ENCODE measurements at regions of chr12 and their contacts with region 1.

Region 1: GRCh38 chr12:10673660-10674384 is at the start of gene STYK1:
- DNase-seq: peak; percentile 91
- H3K4me3 Mint-ChIP-seq: peak within 1 kb of the TSS; percentile 78
- H3K27ac Mint-ChIP-seq: peak within 1 kb of the TSS; percentile 38
- H3K4me1 Mint-ChIP-seq: peaks cover 38% of the 10 kb centered on the region
- H3K27me3 Mint-ChIP-seq: peaks cover 58% of the 10 kb centered on the region
- total RNA-seq, gene STYK1: not detected in 2 replicates

Region 2: GRCh38 chr12:10153271-10154144 is 520.3 kb before region 1 on chr12:
- intact Hi-C with region 1: no loop called
- DNase-seq: peak; percentile 88
- H3K4me3 Mint-ChIP-seq: peak overlapping the region; percentile 92
- H3K27ac Mint-ChIP-seq: no peak overlapping the region
- H3K4me1 Mint-ChIP-seq: peaks cover 9% of the 10 kb centered on the region
- H3K27me3 Mint-ChIP-seq: peaks cover 47% of the 10 kb centered on the region

Region 3: DNA sequence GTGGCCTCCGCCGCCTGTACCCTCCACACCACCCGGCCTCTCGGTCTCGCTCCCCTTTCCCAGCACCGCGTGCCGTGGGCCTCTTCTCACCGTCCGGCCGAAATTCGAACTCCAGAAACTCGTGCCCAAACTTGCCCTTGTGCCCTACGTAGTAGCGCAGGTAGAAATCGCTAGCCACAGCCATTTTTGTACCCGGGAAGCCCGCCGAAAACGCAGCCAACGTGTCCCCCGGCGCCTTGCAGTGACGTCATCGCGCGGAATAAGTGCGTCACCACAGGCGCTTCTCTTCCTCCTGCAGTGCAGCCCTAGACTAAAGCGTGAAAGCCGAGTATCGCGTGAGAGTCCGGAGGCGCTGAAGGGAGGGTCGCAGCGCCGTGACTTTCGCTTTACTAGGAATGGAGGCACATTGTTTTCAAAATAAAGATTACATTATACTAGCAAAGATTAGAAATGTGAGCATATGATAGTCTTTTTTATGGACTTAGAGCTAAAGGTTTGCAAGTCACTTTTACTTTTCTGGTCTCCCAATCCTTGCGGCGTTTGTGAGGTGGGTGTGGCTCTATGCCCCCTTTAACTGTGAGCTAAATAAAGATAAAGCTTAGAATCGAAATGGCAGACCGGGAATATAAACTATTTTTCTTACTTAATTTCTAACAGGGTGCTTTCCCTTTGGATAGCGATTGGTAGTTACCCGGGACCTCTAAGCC is 60.3 kb before region 1 on chr12 and contains the start of gene MAGOHB:
- intact Hi-C with region 1: loop called (anchors 2 kb)
- DNase-seq: peak; percentile 100
- H3K4me3 Mint-ChIP-seq: peak within 1 kb of the TSS; percentile 100
- H3K27ac Mint-ChIP-seq: peak within 1 kb of the TSS; percentile 100
- H3K4me1 Mint-ChIP-seq: peaks cover 27% of the 10 kb centered on the region
- H3K27me3 Mint-ChIP-seq: peaks cover 19% of the 10 kb centered on the region
- total RNA-seq, gene MAGOHB: 88.6 and 91.1 TPM in 2 replicates

Region 4: DNA sequence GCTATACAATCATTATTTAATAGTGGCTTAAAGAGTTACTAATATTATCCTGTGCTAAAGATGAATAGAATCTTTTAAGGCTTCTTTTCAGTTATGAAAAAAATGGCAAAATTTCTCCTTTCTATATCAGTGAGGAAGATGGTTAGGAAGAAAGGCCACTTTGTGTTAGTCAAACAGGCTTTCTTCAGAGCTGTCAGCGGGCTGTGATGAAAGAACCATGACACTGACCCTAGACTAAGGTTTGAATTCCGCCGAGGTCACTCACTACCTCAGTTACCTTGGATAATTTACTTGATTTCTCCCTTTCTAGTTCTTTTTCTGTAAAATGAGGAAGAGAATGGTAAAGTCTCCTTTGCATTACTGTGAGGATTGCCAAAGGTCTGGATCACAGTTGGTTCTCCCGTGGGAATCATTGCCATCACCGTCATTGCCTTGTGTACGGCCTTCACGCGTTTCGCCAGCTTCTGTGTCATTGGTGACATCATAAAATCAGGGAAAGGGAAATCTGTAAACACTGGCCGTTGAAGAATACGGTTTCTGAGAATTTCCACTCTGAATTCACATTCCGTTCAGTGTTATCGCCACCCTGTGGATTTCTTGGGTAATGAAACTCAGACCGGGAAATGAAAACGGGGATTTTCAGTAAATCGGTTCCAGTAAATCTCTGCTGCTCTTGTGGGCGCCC is 76.0 kb after region 1 on chr12:
- intact Hi-C with region 1: loop called (anchors 5 kb)
- DNase-seq: peak; percentile 93
- H3K4me3 Mint-ChIP-seq: peak overlapping the region; percentile 66
- H3K27ac Mint-ChIP-seq: no peak overlapping the region
- H3K4me1 Mint-ChIP-seq: peaks cover 17% of the 10 kb centered on the region
- H3K27me3 Mint-ChIP-seq: peaks cover 36% of the 10 kb centered on the region

Measured in activated CD4-positive, alpha-beta T cell treated with anti-CD3 and anti-CD28 coated beads, Interleukin-2, amount 10 ng/mL, durations not matched to agents 24 days and 14 days (primary cell).